Astrocyte of the cerebellum (primary cell): ENCODE measurements at regions of chr22 and their contacts with region 1.

Region 1: GRCh38 chr22:47724751-47725150 is 962.3 kb downstream of the TBC1D22A start:
- DNase-seq: no peak
- H3K4me3 ChIP-seq: no peak overlapping the region
- CTCF ChIP-seq: no peak

Region 2: DNA sequence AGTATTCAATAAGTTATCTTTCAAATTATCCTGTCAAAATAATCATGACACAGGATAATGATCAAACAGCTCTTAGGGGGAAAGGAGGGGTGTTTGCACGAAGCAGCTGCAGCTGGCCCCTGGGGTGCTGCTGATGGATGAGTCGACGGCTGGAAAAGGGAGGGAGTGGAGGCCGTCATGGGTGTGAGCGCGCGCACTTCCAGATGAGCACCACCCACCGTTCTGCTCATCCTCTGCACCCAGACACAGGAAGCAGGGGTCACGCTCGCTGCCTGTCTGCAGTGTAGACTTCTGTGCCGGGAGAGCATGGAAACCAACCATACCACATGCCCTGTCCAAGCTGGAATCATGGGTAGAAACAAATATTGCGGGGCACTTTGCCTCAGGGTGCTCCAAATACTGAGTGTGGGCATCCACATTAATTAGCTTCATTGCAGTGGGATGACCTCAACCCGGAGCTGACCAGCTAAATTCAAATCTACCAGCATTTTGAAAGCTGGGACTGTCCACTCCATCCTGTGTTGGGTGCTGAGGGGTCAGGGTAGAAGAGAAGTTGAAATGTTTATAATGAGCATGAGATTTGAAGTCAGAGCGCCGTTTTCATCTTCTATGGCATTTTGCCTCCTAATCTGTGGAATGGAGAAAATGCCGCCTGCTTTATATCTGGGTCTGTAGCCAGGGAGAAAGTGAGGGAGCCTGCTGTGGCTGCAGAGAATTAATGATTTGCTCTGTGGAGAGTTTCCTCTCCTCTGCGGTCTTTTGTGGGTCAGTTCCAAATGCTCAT is 159.9 kb before region 1 on chr22:
- in situ Hi-C with region 1: no loop called
- DNase-seq: no peak
- H3K4me3 ChIP-seq: no peak overlapping the region
- CTCF ChIP-seq: no peak

Region 3: DNA sequence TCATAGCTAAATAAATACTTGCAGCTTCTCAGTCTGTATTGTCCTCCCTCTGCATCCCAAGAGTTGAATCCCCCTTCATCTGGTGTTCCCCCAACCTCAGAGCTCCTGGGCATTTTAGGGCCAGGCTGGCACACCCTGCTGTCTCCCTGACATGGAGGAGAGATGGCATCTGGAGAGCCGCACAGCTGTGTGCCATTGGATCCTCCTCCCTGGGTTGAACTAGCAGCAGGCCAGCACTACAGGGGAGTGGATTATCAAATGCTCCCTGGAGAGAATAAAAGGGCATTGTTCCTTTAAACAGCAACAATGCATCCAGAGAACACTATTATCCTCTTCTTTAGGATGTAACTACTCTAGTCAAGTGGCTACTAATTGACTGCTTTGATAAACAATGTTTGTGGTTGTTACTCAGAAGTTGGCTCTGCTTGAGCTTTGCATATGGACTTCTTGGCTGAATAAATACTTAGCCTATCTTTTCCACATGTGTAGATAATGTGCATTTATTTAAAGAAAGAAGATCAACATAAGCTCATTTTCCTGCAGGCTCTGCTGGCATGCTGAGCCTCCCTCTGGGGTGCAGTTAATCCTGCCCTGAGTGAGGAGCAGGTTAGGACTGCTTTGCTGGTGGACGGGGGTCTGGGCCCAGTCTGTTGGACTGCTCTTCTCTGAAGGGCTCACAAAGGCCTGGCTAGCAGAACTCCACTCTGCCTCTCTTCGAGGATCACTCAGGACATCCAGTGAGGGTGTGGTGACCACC is 65.1 kb before region 1 on chr22:
- in situ Hi-C with region 1: loop called (anchors 5 kb)
- DNase-seq: no peak
- H3K4me3 ChIP-seq: no peak overlapping the region
- CTCF ChIP-seq: no peak